ENCODE measurements at regions of chr1 and their contacts with region 1.

Region 1: GRCh38 chr1:223133824-223134435 is 9.1 kb downstream of the TLR5 start:
- DNase-seq: peak; percentile 94
- ATAC-seq: peak; percentile 92
- H3K4me3 ChIP-seq: peak overlapping the region; percentile 62
- H3K27ac ChIP-seq: peak overlapping the region; percentile 84
- H3K4me1 ChIP-seq: peaks cover 33% of the 10 kb centered on the region
- H3K27me3 ChIP-seq: no peaks in the 10 kb centered on the region
- CTCF ChIP-seq: peak; percentile 96

Region 2: DNA sequence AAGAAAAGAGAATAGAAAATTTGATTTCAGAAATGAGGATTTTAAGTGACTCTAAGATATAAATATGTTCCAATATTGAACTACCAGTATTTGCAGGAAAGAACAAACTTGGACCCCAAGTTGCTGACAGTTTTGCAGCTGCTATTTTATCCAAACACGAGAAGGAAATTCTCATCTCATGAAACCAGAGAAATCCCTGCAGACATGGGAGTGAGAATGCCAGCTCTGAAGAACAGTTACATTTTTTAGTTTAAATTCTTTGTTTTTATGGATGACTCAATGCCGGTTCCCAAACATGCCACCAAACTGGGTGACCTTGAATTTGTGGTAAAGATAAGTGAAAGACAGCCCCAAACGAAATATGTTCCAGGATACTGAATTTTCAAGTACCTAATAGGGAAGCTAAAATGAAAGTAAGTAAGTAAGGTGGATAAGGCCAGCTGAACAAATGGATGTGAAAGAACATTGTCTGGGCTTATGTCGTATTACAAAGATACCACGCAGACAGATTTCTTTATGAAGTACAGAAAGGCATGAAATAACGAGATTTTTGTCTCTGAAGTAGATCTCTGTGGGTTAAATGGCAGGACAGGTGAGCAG is 10.8 kb before region 1 on chr1:
- CTCF ChIA-PET with region 1: interaction called, 38 read pairs
- POLR2A ChIA-PET with region 1: no interaction called
- intact Hi-C with region 1: no loop called
- DNase-seq: peak; percentile 18
- ATAC-seq: peak; percentile 14; the same call in 1 of the 2 replicates
- H3K4me3 ChIP-seq: peak overlapping the region; percentile 63
- H3K27ac ChIP-seq: no peak overlapping the region
- H3K4me1 ChIP-seq: peaks cover 13% of the 10 kb centered on the region
- H3K27me3 ChIP-seq: no peaks in the 10 kb centered on the region
- CTCF ChIP-seq: no peak

Region 3: DNA sequence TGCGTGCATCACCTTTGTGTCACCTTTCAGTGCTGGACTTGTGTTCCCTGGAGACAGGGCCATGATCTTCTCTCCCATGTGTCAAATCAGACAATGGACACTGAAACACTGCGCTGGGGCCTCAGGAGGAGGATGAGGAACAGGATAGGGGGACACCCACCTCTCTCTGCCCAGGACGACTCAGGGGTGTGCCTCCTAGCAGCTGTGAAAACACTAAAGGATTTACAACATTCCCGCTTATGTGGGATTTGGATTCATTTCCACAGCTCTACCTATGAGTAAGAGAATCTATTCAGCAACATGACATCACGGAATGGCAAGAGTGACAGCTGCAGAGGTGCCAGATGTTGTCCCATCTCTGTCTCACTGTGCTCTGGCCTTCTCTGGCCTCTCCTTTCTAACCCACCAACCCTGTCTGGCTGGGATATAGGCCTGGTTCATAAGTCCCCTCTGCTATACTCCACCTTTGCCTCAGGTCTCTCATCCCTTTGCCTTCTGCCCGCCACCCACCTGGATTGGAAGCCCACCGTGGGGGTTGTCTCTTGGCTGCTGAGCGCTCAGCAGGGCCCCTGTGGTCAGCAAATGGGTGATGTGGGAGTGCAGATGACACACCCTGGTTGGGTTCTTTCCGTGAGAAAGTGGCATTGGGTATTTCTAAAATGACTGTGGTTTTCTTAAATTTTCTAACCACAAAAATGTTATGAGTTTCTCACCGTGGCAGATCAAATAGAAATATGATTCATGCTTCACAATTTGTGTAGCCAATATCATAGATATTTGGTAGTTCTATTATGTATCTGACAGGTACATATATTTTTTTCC is 56.2 kb after region 1 on chr1:
- CTCF ChIA-PET with region 1: interaction called, 3 read pairs
- POLR2A ChIA-PET with region 1: no interaction called
- intact Hi-C with region 1: loop called (anchors 2 kb)
- DNase-seq: peak; percentile 98
- ATAC-seq: peak; percentile 90
- H3K4me3 ChIP-seq: peak overlapping the region; percentile 9; the same call in 1 of the 2 replicates
- H3K27ac ChIP-seq: peak overlapping the region; percentile 93
- H3K4me1 ChIP-seq: peaks cover 31% of the 10 kb centered on the region
- H3K27me3 ChIP-seq: no peaks in the 10 kb centered on the region
- CTCF ChIP-seq: no peak

Region 4: GRCh38 chr1:223244366-223245103 is 110.6 kb after region 1 on chr1:
- CTCF ChIA-PET with region 1: interaction called, 6 read pairs
- POLR2A ChIA-PET with region 1: interaction called, 4 read pairs
- intact Hi-C with region 1: loop called (anchors 1 kb)
- DNase-seq: peak; percentile 25
- ATAC-seq: peak; percentile 38; the same call in 1 of the 2 replicates
- H3K4me3 ChIP-seq: no peak overlapping the region
- H3K27ac ChIP-seq: no peak overlapping the region
- H3K4me1 ChIP-seq: no peaks in the 10 kb centered on the region
- H3K27me3 ChIP-seq: peaks cover 18% of the 10 kb centered on the region; the same call in 1 of the 2 replicates
- CTCF ChIP-seq: peak; percentile 49; the same call in 1 of the 2 replicates

Region 5: DNA sequence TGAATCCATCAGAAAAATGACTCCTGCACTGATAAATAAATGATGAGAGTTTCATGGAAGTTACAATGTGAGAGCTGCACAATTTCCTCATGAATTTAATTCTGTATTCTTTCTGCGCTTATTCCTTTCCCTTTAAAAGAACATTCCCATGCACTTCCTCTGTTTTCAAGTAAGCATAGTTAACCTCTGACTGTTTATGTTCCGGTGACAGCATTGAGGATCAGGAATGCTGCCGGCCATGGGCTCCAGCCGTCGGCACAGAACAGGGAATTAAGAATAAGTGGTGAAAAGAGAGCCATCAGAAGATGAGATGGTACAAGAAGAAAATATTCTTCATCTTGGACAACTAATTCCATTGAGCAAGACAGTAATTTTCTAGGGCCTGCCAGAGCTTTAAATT is 164.8 kb after region 1 on chr1:
- CTCF ChIA-PET with region 1: no interaction called
- POLR2A ChIA-PET with region 1: no interaction called
- intact Hi-C with region 1: no loop called
- DNase-seq: no peak
- ATAC-seq: no peak
- H3K4me3 ChIP-seq: no peak overlapping the region
- H3K27ac ChIP-seq: no peak overlapping the region
- H3K4me1 ChIP-seq: no peaks in the 10 kb centered on the region
- H3K27me3 ChIP-seq: peaks cover 21% of the 10 kb centered on the region
- CTCF ChIP-seq: no peak

Region 6: GRCh38 chr1:223358826-223359225 is 224.9 kb after region 1 on chr1:
- CTCF ChIA-PET with region 1: interaction called, 12 read pairs
- POLR2A ChIA-PET with region 1: no interaction called
- intact Hi-C with region 1: loop called (anchors 2 kb)
- DNase-seq: peak; percentile 52
- ATAC-seq: peak; percentile 35; the same call in 1 of the 2 replicates
- H3K4me3 ChIP-seq: no peak overlapping the region
- H3K27ac ChIP-seq: no peak overlapping the region
- H3K4me1 ChIP-seq: peaks cover 9% of the 10 kb centered on the region
- H3K27me3 ChIP-seq: peaks cover 92% of the 10 kb centered on the region
- CTCF ChIP-seq: no peak

Measured in PC-3 (cell line).